ENCODE measurements at regions of chr9 and their contacts with region 1.

Region 1: GRCh38 chr9:1009101-1009707 is 32.7 kb downstream of the DMRT3 start:
- DNase-seq: peak; percentile 79 to 87
- H3K4me3 ChIP-seq: no peak overlapping the region
- H3K27ac ChIP-seq: no peak overlapping the region
- H3K4me1 ChIP-seq: peaks cover 0 to 4% of the 10 kb centered on the region in 2 donors
- H3K27me3 ChIP-seq: no peaks in the 10 kb centered on the region
- CTCF ChIP-seq: peak; percentile 91 to 98 (median 98)
- POLR2A ChIP-seq: no peak

Region 2: GRCh38 chr9:385818-386398 is 623.3 kb before region 1 on chr9:
- intact Hi-C with region 1: loop called (anchors 10 kb)
- DNase-seq: peak; percentile 54 to 55
- H3K4me3 ChIP-seq: no peak overlapping the region
- H3K27ac ChIP-seq: no peak overlapping the region
- H3K4me1 ChIP-seq: no peaks in the 10 kb centered on the region
- H3K27me3 ChIP-seq: no peaks in the 10 kb centered on the region
- CTCF ChIP-seq: peak; percentile 84 to 93 (median 89)
- POLR2A ChIP-seq: no peak

Region 3: GRCh38 chr9:801399-802071 is 207.7 kb before region 1 on chr9:
- intact Hi-C with region 1: no loop called
- DNase-seq: peak; percentile 88 to 91
- H3K4me3 ChIP-seq: no peak overlapping the region
- H3K27ac ChIP-seq: peak overlapping the region; percentile 21 to 67 (median 38)
- H3K4me1 ChIP-seq: peaks cover 12 to 17% of the 10 kb centered on the region in 2 donors
- H3K27me3 ChIP-seq: no peaks in the 10 kb centered on the region
- CTCF ChIP-seq: no peak
- POLR2A ChIP-seq: no peak

Region 4: DNA sequence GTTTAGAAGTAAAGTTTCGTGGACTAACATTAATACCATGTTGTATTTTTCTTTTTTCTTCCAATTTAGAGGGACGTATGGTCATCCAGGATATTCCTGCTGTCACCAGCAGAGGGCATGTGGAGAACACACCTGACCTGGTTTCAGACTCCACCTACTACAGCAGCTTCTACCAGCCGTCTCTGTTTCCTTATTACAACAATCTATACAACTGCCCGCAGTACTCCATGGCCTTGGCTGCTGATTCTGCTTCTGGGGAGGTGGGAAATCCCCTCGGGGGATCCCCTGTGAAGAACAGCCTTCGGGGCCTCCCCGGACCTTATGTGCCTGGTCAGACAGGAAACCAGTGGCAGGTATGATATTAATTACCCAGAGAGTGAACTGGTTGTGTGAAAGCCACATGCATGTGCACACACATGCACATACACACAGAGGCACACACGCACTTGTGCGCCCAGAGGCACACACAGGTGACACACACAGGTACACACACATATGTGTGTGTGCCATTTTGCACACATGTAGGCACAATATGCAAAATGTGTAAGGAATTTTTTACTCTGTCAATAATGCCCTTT is 115.3 kb before region 1 on chr9:
- intact Hi-C with region 1: loop called (anchors 2 kb)
- DNase-seq: peak; percentile 75 to 76
- H3K4me3 ChIP-seq: no peak overlapping the region
- H3K27ac ChIP-seq: peak overlapping the region in 2 of 3 donors; percentile 13 to 52
- H3K4me1 ChIP-seq: no peaks in the 10 kb centered on the region
- H3K27me3 ChIP-seq: no peaks in the 10 kb centered on the region
- CTCF ChIP-seq: peak; percentile 63 to 99 (median 87)
- POLR2A ChIP-seq: no peak

Region 5: DNA sequence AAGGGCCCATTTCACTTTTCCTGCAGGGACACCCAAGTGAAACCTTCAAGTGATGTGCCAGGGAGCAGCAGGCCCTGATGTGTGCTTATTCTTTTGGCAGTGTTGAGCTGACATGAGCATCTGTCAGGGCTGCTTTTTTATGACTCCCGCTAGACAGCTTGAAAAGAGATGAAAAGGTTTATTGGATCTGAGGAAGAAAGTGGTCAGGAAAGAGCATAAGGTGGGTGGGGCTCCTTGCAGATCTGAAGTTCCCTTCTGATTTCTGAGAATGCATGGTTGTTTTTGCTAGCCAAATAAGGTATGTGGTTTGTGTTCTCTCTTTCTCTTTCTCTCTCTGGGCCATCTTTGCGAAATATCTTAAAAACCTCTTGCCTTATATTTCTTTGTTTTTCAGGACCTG is 357.1 kb after region 1 on chr9:
- intact Hi-C with region 1: no loop called
- DNase-seq: no peak
- H3K4me3 ChIP-seq: no peak overlapping the region
- H3K27ac ChIP-seq: no peak overlapping the region
- H3K4me1 ChIP-seq: no peaks in the 10 kb centered on the region
- H3K27me3 ChIP-seq: no peaks in the 10 kb centered on the region
- CTCF ChIP-seq: no peak
- POLR2A ChIP-seq: no peak

Measured in thyroid gland (tissue), 4 donors.